ENCODE measurements at regions of chr5 and their contacts with region 1.

Region 1: GRCh38 chr5:78899922-78900362 is 85.2 kb downstream of the ARSB start:
- DNase-seq: peak; percentile 53 to 79
- H3K4me3 ChIP-seq: no peak overlapping the region
- H3K27ac ChIP-seq: no peak overlapping the region
- H3K4me1 ChIP-seq: peaks cover 0 to 3% (median 0%) of the 10 kb centered on the region in 4 experiments; a peak in 1 of 7 replicates
- H3K27me3 ChIP-seq: no peaks in the 10 kb centered on the region
- CTCF ChIP-seq: peak; percentile 42 to 91 (median 82)
- EP300 ChIP-seq: no peak
- POLR2A ChIP-seq: no peak
- RAD21 ChIP-seq: peak; percentile 97 to 99

Region 2: DNA sequence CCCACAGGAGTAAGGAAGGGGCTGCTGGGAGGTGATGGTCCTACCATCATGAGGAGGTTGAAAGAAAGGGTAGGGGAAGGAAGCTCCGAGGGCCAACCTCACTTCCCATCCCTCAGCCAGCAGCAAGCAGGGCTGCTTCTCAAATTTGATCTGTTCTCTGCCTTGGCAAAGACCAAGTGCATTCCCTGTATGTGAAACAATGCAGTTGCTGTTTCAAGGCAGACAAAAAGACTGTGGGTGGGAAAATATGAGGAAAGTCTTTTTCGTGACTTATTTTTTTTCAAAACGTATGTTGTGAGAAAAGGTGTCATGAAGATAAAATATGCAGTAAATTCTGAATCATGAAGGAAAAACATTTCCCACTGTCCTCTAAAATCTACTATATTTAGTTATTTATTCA is 80.8 kb before region 1 on chr5:
- CTCF ChIA-PET with region 1: no interaction called
- POLR2A ChIA-PET with region 1: no interaction called
- DNase-seq: no peak
- H3K4me3 ChIP-seq: no peak overlapping the region
- H3K27ac ChIP-seq: no peak overlapping the region
- H3K4me1 ChIP-seq: no peaks in the 10 kb centered on the region
- H3K27me3 ChIP-seq: no peaks in the 10 kb centered on the region
- CTCF ChIP-seq: no peak
- EP300 ChIP-seq: no peak
- POLR2A ChIP-seq: no peak
- RAD21 ChIP-seq: no peak

Region 3: DNA sequence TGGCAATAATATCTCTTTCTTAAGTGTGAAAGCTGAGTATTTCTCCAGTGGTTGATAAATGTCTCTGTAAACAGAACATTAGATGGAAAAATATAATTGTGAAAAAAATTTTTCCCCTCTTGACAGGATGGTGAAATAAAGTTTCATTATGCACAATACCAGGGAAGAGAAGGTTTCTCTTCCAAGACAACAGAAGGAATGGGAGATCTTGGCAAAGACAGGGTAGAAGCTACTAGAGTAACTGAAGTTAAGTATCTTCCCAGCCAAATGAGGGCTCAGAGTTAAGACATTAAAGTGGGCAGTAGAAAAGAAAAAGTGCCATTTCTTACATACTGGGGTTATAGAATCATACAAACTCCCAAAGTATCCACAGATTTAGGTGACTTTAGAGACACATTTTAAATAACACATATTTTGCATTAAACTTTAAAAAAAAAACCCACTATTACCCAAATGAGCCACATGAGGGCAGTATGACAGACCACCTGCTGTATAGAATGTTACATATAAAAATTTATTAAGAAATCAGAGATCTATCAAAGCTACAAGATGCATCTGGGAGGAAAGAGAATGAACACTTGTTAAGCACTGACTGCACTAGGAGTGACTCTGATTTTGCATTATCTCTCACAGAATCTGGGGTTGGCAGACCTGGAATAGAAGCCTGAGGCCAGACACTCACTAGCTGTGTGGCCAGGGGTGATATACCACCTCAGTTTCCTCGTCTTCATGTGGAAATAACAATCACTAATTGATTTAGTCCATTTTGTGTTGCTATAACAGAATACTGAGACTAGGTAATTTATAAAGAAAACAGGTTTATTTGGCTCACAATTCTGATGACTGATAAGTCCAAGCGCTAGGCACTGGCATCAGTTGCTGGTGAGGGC is 13.4 kb before region 1 on chr5:
- CTCF ChIA-PET with region 1: interaction called, 41 read pairs
- POLR2A ChIA-PET with region 1: no interaction called
- DNase-seq: no peak
- H3K4me3 ChIP-seq: no peak overlapping the region
- H3K27ac ChIP-seq: no peak overlapping the region
- H3K4me1 ChIP-seq: peaks cover 0 to 7% (median 1%) of the 10 kb centered on the region in 4 experiments; a peak in 1 of 7 replicates
- H3K27me3 ChIP-seq: no peaks in the 10 kb centered on the region
- CTCF ChIP-seq: peak in 1 of 3 experiments; percentile 34; a peak in 2 of 4 replicates
- EP300 ChIP-seq: no peak
- POLR2A ChIP-seq: no peak
- RAD21 ChIP-seq: peak; percentile 18 to 24; a peak in 3 of 4 replicates

Region 4: GRCh38 chr5:78920604-78921003 is 20.7 kb after region 1 on chr5:
- CTCF ChIA-PET with region 1: interaction called, 21 read pairs
- POLR2A ChIA-PET with region 1: interaction called, 3 read pairs
- DNase-seq: no peak
- H3K4me3 ChIP-seq: no peak overlapping the region
- H3K27ac ChIP-seq: no peak overlapping the region
- H3K4me1 ChIP-seq: no peaks in the 10 kb centered on the region; a peak in 1 of 7 replicates
- H3K27me3 ChIP-seq: no peaks in the 10 kb centered on the region
- CTCF ChIP-seq: peak; percentile 22 to 53 (median 43)
- EP300 ChIP-seq: no peak
- POLR2A ChIP-seq: no peak
- RAD21 ChIP-seq: peak; percentile 61 to 68

Region 5: GRCh38 chr5:78964887-78965286 is 64.9 kb after region 1 on chr5:
- CTCF ChIA-PET with region 1: interaction called, 101 read pairs
- POLR2A ChIA-PET with region 1: interaction called, 3 read pairs
- DNase-seq: no peak
- H3K4me3 ChIP-seq: no peak overlapping the region
- H3K27ac ChIP-seq: no peak overlapping the region
- H3K4me1 ChIP-seq: no peaks in the 10 kb centered on the region
- H3K27me3 ChIP-seq: no peaks in the 10 kb centered on the region
- CTCF ChIP-seq: peak in 2 of 3 experiments; percentile 42 to 49; a peak in 2 of 4 replicates
- EP300 ChIP-seq: no peak
- POLR2A ChIP-seq: no peak
- RAD21 ChIP-seq: peak; percentile 83 to 84

Region 6: DNA sequence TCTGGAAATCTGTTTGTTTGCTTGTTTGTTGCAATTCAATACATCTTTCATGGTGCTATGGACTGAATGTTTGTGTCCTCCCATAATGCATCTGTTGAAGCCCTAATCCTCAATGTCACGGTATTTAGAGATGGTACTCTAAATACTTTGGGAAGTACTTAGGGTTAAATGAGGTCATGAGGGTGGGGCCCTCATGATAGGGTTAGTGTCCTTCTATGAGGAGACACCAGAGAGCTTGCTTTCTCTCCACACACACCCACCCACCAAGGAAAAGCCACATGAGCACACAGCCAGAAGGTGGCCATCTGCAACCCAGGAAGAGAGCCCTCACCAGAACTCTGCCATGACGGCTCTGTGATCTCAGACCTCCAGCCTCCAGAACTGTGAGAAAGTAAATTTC is 136.8 kb after region 1 on chr5:
- CTCF ChIA-PET with region 1: no interaction called
- POLR2A ChIA-PET with region 1: no interaction called
- DNase-seq: no peak
- H3K4me3 ChIP-seq: no peak overlapping the region
- H3K27ac ChIP-seq: no peak overlapping the region
- H3K4me1 ChIP-seq: no peaks in the 10 kb centered on the region
- H3K27me3 ChIP-seq: no peaks in the 10 kb centered on the region
- CTCF ChIP-seq: no peak
- EP300 ChIP-seq: no peak
- POLR2A ChIP-seq: no peak
- RAD21 ChIP-seq: no peak